CD4-positive, alpha-beta memory T cell (primary cell): ENCODE measurements at regions of chr15 and their contacts with region 1.

Region 1: DNA sequence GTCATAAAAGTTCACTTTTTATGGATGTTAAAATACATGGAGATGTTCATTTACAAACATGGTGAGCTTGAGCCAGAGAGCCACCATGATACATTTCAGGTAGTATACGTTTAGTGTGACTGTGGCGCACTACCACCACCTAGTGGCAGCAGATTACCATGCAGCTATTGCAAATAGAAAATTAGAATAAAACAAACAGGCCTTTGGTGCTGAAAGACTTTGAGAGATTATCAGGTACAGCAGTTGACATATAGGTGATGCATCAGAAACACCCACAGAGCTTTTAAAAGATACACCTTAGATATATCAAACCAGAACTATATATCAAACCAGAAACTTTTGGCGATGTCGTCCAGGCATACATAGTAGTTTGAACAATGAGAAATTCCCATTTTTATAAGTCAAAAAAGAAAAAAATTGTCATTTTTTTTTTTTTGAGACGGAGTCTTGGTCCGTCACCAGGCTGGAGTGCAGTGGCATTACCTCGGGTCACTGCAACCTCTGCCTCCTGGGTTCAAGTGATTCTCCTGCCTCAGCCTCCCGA is 42.0 kb upstream of the ICE2 start:
- DNase-seq: peak; percentile 71 to 80 (median 73)
- H3K4me3 ChIP-seq: no peak overlapping the region
- H3K4me3 Mint-ChIP-seq: peak overlapping the region in 4 of 8 donors; percentile 33 to 58 (median 43)
- H3K27ac ChIP-seq: no peak overlapping the region
- H3K27ac Mint-ChIP-seq: peak overlapping the region; percentile 84 to 90 (median 87)
- H3K4me1 ChIP-seq: peaks cover 32% of the 10 kb centered on the region
- H3K4me1 Mint-ChIP-seq: peaks cover 46 to 74% (median 59%) of the 10 kb centered on the region in 4 donors
- H3K27me3 ChIP-seq: no peaks in the 10 kb centered on the region
- H3K27me3 Mint-ChIP-seq: no peaks in the 10 kb centered on the region

Region 2: DNA sequence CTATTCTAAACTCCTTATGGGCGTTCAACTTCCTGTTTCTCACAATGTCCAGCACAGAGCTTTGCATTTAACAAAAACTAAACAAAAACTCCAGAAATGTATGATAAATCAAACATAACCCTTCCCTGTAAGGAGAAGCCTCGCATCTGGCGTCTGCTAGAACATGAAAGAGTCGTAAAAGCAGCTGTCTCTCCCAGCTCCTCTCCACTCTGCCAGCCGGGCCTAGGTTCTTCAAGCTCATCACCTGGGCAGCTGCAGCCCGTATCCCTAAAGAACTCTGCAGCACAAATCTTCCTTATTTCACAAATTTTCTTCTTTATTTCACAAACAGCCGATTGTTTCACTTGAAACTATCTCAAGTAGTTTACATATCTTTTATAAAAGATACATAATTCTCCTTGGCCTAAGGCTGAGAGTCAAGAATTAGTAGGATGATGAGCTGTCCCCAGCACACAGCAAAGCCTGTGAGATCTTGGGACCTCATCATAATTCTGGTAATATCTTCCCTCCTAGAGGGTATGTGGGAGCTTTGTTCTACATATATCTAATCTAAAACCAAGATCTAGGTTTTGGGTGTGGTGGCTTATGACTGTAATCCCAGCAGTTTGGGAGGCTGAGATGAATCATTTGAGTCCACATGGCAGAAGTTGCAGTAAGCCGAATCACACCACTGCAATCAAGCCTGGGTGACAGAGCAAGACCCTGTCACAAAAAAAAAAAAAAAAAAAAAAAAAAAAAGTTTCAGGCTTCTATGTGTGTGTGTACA is 158.4 kb before region 1 on chr15:
- CTCF ChIA-PET with region 1: interaction called, 38 read pairs
- POLR2A ChIA-PET with region 1: no interaction called
- intact Hi-C with region 1: loop called (anchors 1 kb)
- DNase-seq: peak; percentile 3 to 49 (median 22)
- H3K4me3 ChIP-seq: no peak overlapping the region
- H3K4me3 Mint-ChIP-seq: peak overlapping the region in 1 of 8 donors; percentile 49
- H3K27ac ChIP-seq: no peak overlapping the region
- H3K27ac Mint-ChIP-seq: peak overlapping the region; percentile 17 to 87 (median 81)
- H3K4me1 ChIP-seq: peaks cover 25% of the 10 kb centered on the region
- H3K4me1 Mint-ChIP-seq: peaks cover 21 to 39% (median 29%) of the 10 kb centered on the region in 4 donors
- H3K27me3 ChIP-seq: no peaks in the 10 kb centered on the region
- H3K27me3 Mint-ChIP-seq: no peaks in the 10 kb centered on the region

Region 3: DNA sequence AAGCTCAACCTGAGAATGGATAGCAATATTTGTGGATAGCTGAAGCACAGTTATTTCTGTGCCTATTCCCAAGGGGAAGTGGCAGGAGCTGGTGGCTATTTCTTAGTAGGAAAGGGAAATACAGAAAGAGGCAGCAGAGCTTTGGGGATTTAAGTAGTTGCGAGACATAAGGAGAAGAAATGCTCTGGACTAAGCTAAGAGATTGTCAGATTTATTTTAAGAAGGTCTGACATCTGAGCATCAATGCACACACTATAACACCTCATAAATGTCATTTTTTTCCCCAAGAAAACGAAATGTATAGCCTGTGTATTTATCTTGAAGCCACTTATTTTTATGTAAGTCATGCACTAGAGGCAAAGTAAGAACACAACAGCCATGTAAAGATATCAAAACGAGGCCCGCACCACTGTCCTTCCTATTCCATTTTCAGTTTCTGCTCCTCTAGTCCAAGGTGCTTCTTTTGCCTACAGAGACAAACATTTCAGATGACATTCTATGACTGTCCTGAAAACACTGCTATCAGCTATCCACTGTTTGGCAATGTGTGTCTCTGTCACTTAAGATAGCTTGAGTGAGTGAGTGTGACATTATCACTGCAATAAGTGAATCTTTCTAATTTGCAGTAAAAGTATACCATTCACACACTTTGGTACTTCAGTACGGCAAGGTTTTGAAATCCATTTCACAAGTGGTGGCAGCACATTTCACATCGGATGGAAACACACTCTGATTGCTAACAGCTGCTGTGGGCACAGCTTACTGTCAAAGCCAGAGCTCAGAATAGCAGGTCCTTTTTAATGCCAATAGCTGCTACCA is 20.8 kb after region 1 on chr15:
- CTCF ChIA-PET with region 1: interaction called, 35 read pairs
- POLR2A ChIA-PET with region 1: interaction called, 7 read pairs
- intact Hi-C with region 1: loop called (anchors 2 kb)
- DNase-seq: no peak
- H3K4me3 ChIP-seq: peak overlapping the region in 1 of 2 donors; percentile 2
- H3K4me3 Mint-ChIP-seq: peak overlapping the region; percentile 64 to 87 (median 80)
- H3K27ac ChIP-seq: peak overlapping the region; percentile 58
- H3K27ac Mint-ChIP-seq: peak overlapping the region; percentile 85 to 99 (median 92)
- H3K4me1 ChIP-seq: peaks cover 100% of the 10 kb centered on the region
- H3K4me1 Mint-ChIP-seq: peaks cover 84 to 100% (median 92%) of the 10 kb centered on the region in 4 donors
- H3K27me3 ChIP-seq: no peaks in the 10 kb centered on the region
- H3K27me3 Mint-ChIP-seq: no peaks in the 10 kb centered on the region

Region 4: DNA sequence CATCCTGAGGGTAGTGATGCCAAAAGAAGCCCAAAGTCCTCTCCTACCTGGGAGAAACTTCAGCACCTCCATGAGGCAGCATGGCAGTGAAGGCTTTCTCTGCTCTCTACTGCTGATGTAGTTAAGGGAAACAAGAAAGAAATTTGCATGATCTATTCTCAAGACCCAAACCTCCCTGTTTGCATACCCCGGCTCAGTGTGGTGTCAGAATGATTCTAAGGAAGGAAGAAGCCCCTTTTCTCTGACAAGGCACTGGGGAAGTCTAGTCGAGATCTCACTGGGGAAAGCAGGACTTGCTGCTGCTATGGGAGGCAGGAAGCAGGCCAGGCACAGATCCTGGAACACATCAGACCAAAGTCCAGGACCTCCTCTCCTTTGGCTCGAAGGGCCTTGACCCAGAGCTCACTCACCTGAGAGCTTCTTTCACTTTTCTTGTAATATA is 47.4 kb after region 1 on chr15:
- CTCF ChIA-PET with region 1: interaction called, 20 read pairs
- POLR2A ChIA-PET with region 1: interaction called, 10 read pairs
- intact Hi-C with region 1: no loop called
- DNase-seq: peak in 1 of 5 donors; percentile 39
- H3K4me3 ChIP-seq: peak overlapping the region; percentile 2 to 20
- H3K4me3 Mint-ChIP-seq: peak overlapping the region; percentile 8 to 77 (median 70)
- H3K27ac ChIP-seq: peak overlapping the region; percentile 61
- H3K27ac Mint-ChIP-seq: peak overlapping the region; percentile 81 to 97 (median 92)
- H3K4me1 ChIP-seq: peaks cover 99% of the 10 kb centered on the region
- H3K4me1 Mint-ChIP-seq: peaks cover 84 to 98% (median 90%) of the 10 kb centered on the region in 4 donors
- H3K27me3 ChIP-seq: no peaks in the 10 kb centered on the region
- H3K27me3 Mint-ChIP-seq: no peaks in the 10 kb centered on the region

Region 5: DNA sequence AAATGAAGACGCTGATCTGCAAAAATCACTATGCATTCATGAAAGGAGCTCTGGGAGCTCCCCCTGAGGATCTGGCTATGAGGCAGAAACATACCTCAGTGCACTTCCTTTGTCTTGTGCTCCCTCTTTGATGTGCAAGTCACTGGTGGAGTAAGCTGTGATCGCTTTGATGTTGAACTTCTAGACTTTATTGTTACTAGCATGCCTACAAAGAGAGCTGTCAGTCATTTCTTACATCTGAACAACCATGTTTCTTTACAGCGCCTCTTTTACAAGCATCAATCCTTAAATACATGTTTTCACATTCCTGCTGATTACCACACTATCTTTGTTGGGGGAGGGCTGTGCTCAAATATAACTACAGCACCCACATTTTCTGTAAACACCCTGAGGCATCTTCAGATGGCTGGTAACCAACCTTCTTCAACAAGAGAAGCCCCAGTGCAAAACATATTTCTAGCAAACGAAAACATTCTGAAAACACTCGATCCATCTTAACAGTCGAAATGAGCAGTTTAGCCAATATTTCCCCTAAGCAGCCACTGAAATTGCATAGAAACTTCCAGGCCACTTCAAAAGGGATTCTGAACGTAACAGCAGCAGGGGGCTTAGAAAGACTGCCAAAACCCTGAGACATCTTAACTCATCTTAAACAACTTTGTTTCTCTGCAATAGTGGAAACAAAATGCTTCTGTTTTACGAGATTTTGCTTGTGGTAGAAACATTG is 59.9 kb after region 1 on chr15:
- CTCF ChIA-PET with region 1: interaction called, 28 read pairs
- POLR2A ChIA-PET with region 1: interaction called, 17 read pairs
- intact Hi-C with region 1: loop called (anchors 5 kb)
- DNase-seq: peak; percentile 74 to 88 (median 83)
- H3K4me3 ChIP-seq: peak overlapping the region in 1 of 2 donors; percentile 16
- H3K4me3 Mint-ChIP-seq: peak overlapping the region; percentile 73 to 89 (median 82)
- H3K27ac ChIP-seq: peak overlapping the region; percentile 92
- H3K27ac Mint-ChIP-seq: peak overlapping the region; percentile 92 to 98 (median 97)
- H3K4me1 ChIP-seq: peaks cover 99% of the 10 kb centered on the region
- H3K4me1 Mint-ChIP-seq: peaks cover 73 to 96% (median 85%) of the 10 kb centered on the region in 4 donors
- H3K27me3 ChIP-seq: no peaks in the 10 kb centered on the region
- H3K27me3 Mint-ChIP-seq: no peaks in the 10 kb centered on the region

Region 6: GRCh38 chr15:60859996-60860494 is 339.1 kb after region 1 on chr15:
- CTCF ChIA-PET with region 1: interaction called, 10 read pairs
- POLR2A ChIA-PET with region 1: no interaction called
- intact Hi-C with region 1: no loop called
- DNase-seq: no peak
- H3K4me3 ChIP-seq: no peak overlapping the region
- H3K4me3 Mint-ChIP-seq: no peak overlapping the region
- H3K27ac ChIP-seq: no peak overlapping the region
- H3K27ac Mint-ChIP-seq: peak overlapping the region in 1 of 7 donors; percentile 1
- H3K4me1 ChIP-seq: peaks cover 6% of the 10 kb centered on the region
- H3K4me1 Mint-ChIP-seq: peaks cover 22 to 44% (median 33%) of the 10 kb centered on the region in 4 donors
- H3K27me3 ChIP-seq: no peaks in the 10 kb centered on the region
- H3K27me3 Mint-ChIP-seq: no peaks in the 10 kb centered on the region

Region 7: DNA sequence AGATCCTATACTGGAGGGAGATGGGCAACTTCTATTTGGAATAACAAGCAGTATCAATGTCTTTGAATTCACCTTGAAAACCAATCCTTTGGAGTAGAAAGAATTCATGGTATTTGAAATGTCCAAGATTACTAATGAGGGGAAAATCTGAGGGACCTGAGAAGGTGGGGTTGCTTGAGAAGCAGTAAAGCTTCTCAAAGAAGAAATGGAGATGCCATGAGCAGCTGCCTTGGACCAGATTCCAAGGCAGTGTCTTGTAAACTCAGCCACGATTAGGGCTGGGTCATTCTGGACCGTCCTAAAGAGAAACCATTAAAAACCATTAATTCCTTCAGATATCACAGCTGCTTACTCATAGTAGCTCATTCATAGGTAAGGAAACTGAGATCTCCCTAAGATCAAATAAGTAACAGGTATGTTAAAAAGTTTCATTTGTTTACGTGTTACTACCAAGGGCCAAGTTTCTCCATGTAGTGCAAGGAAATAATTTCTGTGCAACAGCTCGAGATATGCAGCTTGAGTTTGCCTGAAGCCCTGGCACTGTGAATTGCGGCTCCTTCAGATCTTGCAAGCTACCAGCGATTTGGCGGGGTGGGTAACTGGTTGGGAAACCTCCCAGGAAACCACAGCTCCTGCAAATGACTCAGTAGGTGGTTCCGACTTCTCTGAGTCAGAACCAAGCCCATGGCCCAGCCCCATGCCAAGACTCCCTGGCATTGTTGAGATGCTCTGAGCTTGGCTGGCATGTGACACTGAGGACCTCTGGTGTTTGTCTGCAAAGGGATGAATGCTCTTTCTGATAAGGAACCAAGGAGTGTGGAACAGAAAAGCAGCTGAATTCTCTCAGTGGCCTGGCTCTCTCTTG is 411.4 kb after region 1 on chr15:
- CTCF ChIA-PET with region 1: interaction called, 16 read pairs
- POLR2A ChIA-PET with region 1: no interaction called
- intact Hi-C with region 1: no loop called
- DNase-seq: peak; percentile 52 to 86 (median 61)
- H3K4me3 ChIP-seq: no peak overlapping the region
- H3K4me3 Mint-ChIP-seq: peak overlapping the region in 6 of 8 donors; percentile 5 to 65 (median 31)
- H3K27ac ChIP-seq: no peak overlapping the region
- H3K27ac Mint-ChIP-seq: peak overlapping the region in 4 of 7 donors; percentile 8 to 57 (median 55)
- H3K4me1 ChIP-seq: peaks cover 14% of the 10 kb centered on the region
- H3K4me1 Mint-ChIP-seq: peaks cover 9 to 25% (median 14%) of the 10 kb centered on the region in 4 donors
- H3K27me3 ChIP-seq: no peaks in the 10 kb centered on the region
- H3K27me3 Mint-ChIP-seq: no peaks in the 10 kb centered on the region